CD4-positive, alpha-beta T cell (primary cell): ENCODE measurements at regions of chr5 and their contacts with region 1.

Region 1: DNA sequence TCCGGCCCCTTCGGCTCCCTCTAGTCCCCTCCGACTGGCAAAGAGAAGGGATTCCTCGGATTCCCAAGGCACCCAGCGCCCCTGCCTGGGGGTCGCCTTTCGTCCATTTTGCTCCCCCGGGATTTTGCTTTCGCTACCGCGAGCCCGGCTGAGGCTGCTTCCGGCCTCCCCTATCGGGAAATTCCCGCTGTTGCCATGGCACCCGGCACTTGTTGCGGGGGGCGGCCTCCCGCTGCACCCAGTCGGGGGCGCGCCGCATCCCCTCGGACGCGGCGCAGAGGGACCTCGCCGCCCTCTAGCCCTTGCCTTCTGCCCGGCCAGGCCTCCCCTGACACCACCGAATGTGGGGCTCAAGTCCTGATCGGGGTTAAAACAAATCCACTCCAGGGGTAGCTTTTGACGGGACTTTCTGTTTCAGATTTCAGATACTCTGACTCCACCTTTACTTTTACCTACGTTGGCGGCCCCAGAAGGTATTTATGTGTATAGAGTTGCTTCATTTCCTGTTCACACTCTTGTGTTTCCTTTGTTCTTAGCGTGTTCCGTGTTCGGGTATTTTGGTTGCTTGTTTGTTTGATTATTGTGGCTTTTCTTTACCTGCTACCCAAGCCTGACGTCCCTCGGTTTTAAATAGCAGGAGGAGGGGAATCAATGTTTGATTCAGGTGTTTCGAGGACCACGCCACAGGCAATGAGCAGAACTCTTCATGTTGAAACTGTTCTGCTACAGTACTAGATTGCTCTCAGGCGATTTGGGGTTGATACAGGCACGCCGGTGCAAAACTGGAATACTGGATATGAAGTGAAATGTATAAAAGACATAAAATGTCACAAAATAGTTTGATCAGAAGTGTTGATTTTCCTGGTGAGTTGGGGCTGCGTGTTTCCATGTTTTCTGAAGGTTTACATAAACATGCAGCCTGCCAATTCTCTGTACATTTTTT is 1.5 kb downstream of the PARP8 start:
- DNase-seq: peak; percentile 73 to 94 (median 82)
- ATAC-seq: peak; percentile 55
- H3K4me3 ChIP-seq: peak overlapping the region; percentile 93
- H3K4me3 Mint-ChIP-seq: peak overlapping the region; percentile 93
- H3K27ac ChIP-seq: peak overlapping the region; percentile 96 to 100
- H3K27ac Mint-ChIP-seq: peak overlapping the region; percentile 95
- H3K4me1 ChIP-seq: peaks cover 38% of the 10 kb centered on the region
- H3K4me1 Mint-ChIP-seq: peaks cover 73% of the 10 kb centered on the region
- H3K27me3 ChIP-seq: no peaks in the 10 kb centered on the region
- H3K27me3 Mint-ChIP-seq: no peaks in the 10 kb centered on the region
- CTCF ChIP-seq: no peak

Region 2: DNA sequence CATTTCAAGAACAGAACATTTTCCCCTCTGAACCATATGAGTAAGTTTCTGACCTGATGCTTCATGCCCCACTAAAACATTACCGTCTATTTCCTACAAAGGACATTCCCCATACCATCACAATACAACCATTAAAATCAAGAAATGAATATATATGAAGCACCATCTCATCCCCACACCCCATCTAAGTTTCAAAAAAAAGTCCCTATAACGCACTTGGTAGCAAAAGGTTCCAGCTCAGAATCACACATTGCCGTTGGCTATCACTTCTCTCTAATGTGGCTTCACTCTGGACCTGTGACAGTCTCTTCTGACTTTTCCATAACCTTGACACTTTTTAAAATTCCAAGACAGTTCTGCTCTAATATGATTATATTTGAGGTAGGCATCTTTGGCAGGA is 232.8 kb before region 1 on chr5:
- CTCF ChIA-PET with region 1: interaction called, 9 read pairs
- POLR2A ChIA-PET with region 1: interaction called, 51 read pairs
- intact Hi-C with region 1: loop called in 1 of 2 experiments (anchors 5 kb)
- DNase-seq: peak in 1 of 14 experiments; percentile 25
- ATAC-seq: peak; percentile 13
- H3K4me3 ChIP-seq: no peak overlapping the region
- H3K4me3 Mint-ChIP-seq: peak overlapping the region; percentile 49
- H3K27ac ChIP-seq: no peak overlapping the region
- H3K27ac Mint-ChIP-seq: peak overlapping the region; percentile 70
- H3K4me1 ChIP-seq: peaks cover 50% of the 10 kb centered on the region
- H3K4me1 Mint-ChIP-seq: peaks cover 97% of the 10 kb centered on the region
- H3K27me3 ChIP-seq: no peaks in the 10 kb centered on the region
- H3K27me3 Mint-ChIP-seq: no peaks in the 10 kb centered on the region
- CTCF ChIP-seq: no peak

Region 3: GRCh38 chr5:50595199-50595598 is 72.7 kb before region 1 on chr5:
- CTCF ChIA-PET with region 1: no interaction called
- POLR2A ChIA-PET with region 1: interaction called, 16 read pairs
- intact Hi-C with region 1: loop called in 1 of 2 experiments (anchors 5 kb)
- DNase-seq: no peak
- ATAC-seq: no peak
- H3K4me3 ChIP-seq: no peak overlapping the region
- H3K4me3 Mint-ChIP-seq: no peak overlapping the region
- H3K27ac ChIP-seq: no peak overlapping the region
- H3K27ac Mint-ChIP-seq: peak overlapping the region; percentile 61
- H3K4me1 ChIP-seq: peaks cover 26% of the 10 kb centered on the region
- H3K4me1 Mint-ChIP-seq: peaks cover 55% of the 10 kb centered on the region
- H3K27me3 ChIP-seq: no peaks in the 10 kb centered on the region
- H3K27me3 Mint-ChIP-seq: no peaks in the 10 kb centered on the region
- CTCF ChIP-seq: no peak

Region 4: DNA sequence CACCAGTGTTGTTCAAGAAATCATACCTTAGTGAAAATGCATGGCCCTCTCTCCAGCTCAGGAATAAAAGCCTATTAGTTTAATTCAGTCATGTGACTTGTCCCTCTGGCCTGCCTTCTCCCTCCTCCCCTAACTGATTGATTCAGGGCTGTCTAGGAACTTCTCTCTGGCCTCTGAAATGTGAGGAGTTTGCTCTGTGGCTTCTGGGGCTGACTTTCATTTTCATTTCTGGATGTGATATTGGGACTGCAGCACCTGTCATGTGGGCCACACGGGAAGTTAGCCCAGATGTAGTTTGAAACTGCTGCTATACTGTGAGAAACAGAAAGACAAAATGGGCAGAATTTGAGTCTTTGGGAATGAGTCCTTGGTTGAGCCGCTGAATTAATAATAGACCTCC is 43.3 kb after region 1 on chr5:
- CTCF ChIA-PET with region 1: no interaction called
- POLR2A ChIA-PET with region 1: interaction called, 13 read pairs
- intact Hi-C with region 1: loop called (anchors 1 to 5 kb)
- DNase-seq: peak; percentile 21 to 90 (median 39)
- ATAC-seq: peak; percentile 93
- H3K4me3 ChIP-seq: peak overlapping the region; percentile 34
- H3K4me3 Mint-ChIP-seq: peak overlapping the region; percentile 85
- H3K27ac ChIP-seq: peak overlapping the region; percentile 71 to 74
- H3K27ac Mint-ChIP-seq: peak overlapping the region; percentile 92
- H3K4me1 ChIP-seq: peaks cover 31% of the 10 kb centered on the region
- H3K4me1 Mint-ChIP-seq: peaks cover 91% of the 10 kb centered on the region
- H3K27me3 ChIP-seq: no peaks in the 10 kb centered on the region
- H3K27me3 Mint-ChIP-seq: no peaks in the 10 kb centered on the region
- CTCF ChIP-seq: no peak

Region 5: GRCh38 chr5:50751064-50751657 is 83.2 kb after region 1 on chr5:
- CTCF ChIA-PET with region 1: interaction called, 4 read pairs
- POLR2A ChIA-PET with region 1: interaction called, 17 read pairs
- intact Hi-C with region 1: loop called (anchors 1 to 5 kb)
- DNase-seq: peak in 9 of 14 experiments; percentile 10 to 85 (median 39)
- ATAC-seq: peak; percentile 91
- H3K4me3 ChIP-seq: no peak overlapping the region
- H3K4me3 Mint-ChIP-seq: peak overlapping the region; percentile 77
- H3K27ac ChIP-seq: no peak overlapping the region
- H3K27ac Mint-ChIP-seq: peak overlapping the region; percentile 90
- H3K4me1 ChIP-seq: peaks cover 4% of the 10 kb centered on the region
- H3K4me1 Mint-ChIP-seq: peaks cover 61% of the 10 kb centered on the region
- H3K27me3 ChIP-seq: no peaks in the 10 kb centered on the region
- H3K27me3 Mint-ChIP-seq: no peaks in the 10 kb centered on the region
- CTCF ChIP-seq: peak; percentile 90

Region 6: DNA sequence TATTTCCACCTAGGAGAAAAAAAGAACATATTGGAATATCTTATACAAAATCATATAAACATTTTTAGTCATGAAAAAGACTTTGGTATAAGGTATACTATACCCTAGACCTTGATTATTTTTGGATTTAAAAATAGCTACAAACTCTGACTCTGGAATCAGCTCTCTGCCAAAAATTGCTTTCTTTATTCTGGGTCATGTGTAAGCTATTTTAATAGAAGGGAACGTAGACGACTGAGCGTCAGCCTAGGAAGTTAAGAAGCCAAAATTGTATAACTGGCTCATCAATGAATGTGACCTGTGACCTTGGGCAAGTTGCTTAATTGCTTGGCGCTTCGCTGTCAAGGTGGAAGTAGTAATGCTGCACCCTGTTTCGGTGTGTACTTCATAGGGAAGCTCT is 155.6 kb after region 1 on chr5:
- CTCF ChIA-PET with region 1: no interaction called
- POLR2A ChIA-PET with region 1: no interaction called
- intact Hi-C with region 1: no loop called
- DNase-seq: no peak
- ATAC-seq: no peak
- H3K4me3 ChIP-seq: no peak overlapping the region
- H3K4me3 Mint-ChIP-seq: no peak overlapping the region
- H3K27ac ChIP-seq: no peak overlapping the region
- H3K27ac Mint-ChIP-seq: no peak overlapping the region
- H3K4me1 ChIP-seq: no peaks in the 10 kb centered on the region
- H3K4me1 Mint-ChIP-seq: peaks cover 14% of the 10 kb centered on the region
- H3K27me3 ChIP-seq: no peaks in the 10 kb centered on the region
- H3K27me3 Mint-ChIP-seq: no peaks in the 10 kb centered on the region
- CTCF ChIP-seq: no peak